HepG2 (cell line): ENCODE measurements at regions of chr3 and their contacts with region 1.

Region 1: GRCh38 chr3:48429317-48429959 is 448 bp downstream of the PLXNB1 start:
- DNase-seq: peak; percentile 50
- ATAC-seq: peak; percentile 4
- H3K4me3 ChIP-seq: peak overlapping the region; percentile 79 to 93 (median 86)
- H3K27ac ChIP-seq: peak overlapping the region; percentile 99
- H3K4me1 ChIP-seq: peaks cover 84% of the 10 kb centered on the region
- H3K27me3 ChIP-seq: no peaks in the 10 kb centered on the region
- CTCF ChIP-seq: no peak
- EP300 ChIP-seq: no peak
- POLR2A ChIP-seq: no peak; a peak in 1 of 4 replicates
- RAD21 ChIP-seq: peak; percentile 40

Region 2: GRCh38 chr3:48415554-48415953 is 13.9 kb before region 1 on chr3:
- CTCF ChIA-PET with region 1: interaction called, 9 read pairs
- POLR2A ChIA-PET with region 1: interaction called, 130 read pairs
- in situ Hi-C with region 1: no loop called
- intact Hi-C with region 1: no loop called
- DNase-seq: no peak
- ATAC-seq: peak; percentile 30
- H3K4me3 ChIP-seq: no peak overlapping the region
- H3K27ac ChIP-seq: no peak overlapping the region
- H3K4me1 ChIP-seq: no peaks in the 10 kb centered on the region
- H3K27me3 ChIP-seq: no peaks in the 10 kb centered on the region
- CTCF ChIP-seq: peak; percentile 56
- EP300 ChIP-seq: no peak
- POLR2A ChIP-seq: no peak
- RAD21 ChIP-seq: peak; percentile 60

Region 3: DNA sequence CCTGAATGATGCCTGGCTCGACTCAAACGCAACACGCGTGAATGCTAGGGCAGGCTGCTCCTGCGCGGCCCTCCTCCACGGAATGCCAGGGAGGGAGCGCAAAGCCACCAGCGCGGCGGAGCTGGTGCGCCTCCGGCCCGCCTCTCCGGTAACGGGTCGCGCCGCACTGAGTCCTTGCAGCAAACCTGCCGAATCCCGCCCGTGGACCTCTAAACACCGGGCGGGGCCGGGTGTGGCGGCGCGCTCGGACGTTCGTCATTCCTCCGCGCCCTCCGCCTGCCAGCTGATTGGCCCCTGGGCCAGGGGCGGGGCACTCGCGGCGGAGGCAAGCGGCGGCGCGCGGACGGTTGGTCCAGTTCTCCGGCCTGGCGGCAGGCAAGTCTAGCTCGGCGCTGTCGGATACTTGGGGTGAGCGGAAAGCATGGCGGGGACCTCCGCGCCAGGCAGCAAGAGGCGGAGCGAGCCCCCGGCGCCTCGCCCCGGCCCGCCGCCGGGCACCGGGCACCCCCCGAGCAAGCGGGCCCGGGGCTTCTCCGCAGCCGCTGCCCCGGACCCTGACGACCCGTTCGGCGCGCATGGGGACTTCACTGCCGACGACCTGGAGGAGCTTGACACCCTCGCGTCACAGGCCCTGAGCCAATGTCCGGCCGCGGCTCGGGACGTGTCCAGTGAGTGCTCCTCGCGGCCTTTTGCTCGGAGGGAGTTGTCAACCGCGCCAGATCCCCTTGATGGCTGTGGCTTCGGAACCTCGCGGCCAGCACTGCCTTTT is 17.2 kb after region 1 on chr3 and contains the start of gene ATRIP:
- CTCF ChIA-PET with region 1: no interaction called
- POLR2A ChIA-PET with region 1: interaction called, 120 read pairs
- in situ Hi-C with region 1: no loop called
- intact Hi-C with region 1: no loop called
- DNase-seq: peak; percentile 80
- ATAC-seq: peak; percentile 92
- H3K4me3 ChIP-seq: peak within 1 kb of the TSS; percentile 74 to 100 (median 86)
- H3K27ac ChIP-seq: peak within 1 kb of the TSS; percentile 78
- H3K4me1 ChIP-seq: peaks cover 59% of the 10 kb centered on the region
- H3K27me3 ChIP-seq: no peaks in the 10 kb centered on the region; a peak in 1 of 5 replicates
- CTCF ChIP-seq: no peak
- EP300 ChIP-seq: 0 out of 4 replicates have a peak, but pooled peaks of 1 of the 2 experiments have one; percentile 45
- POLR2A ChIP-seq: peak; percentile 91 to 98
- RAD21 ChIP-seq: peak; percentile 69
- total RNA-seq, gene ATRIP: 11.4 and 12.5 TPM in 2 replicates

Region 4: DNA sequence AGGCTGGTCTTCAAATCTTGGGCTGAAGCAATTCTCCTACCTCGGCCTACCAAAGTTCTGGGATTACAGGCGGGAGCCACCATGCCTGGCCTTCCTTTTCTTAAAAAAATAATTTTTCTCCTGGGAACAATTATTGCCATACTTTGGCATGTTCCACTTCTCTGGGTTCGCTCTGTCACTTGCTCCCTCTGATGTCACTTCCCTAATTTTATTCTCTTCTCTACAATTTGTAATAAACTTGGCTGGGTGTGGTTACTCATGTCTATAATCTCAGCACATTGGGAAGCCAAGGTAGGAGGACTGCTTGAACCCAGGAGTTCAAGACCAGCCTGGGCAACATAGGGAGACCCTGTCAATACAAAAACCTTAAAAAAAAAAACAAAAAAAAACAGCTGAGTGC is 605.8 kb after region 1 on chr3:
- CTCF ChIA-PET with region 1: no interaction called
- POLR2A ChIA-PET with region 1: no interaction called
- in situ Hi-C with region 1: no loop called
- intact Hi-C with region 1: no loop called
- DNase-seq: no peak
- ATAC-seq: no peak
- H3K4me3 ChIP-seq: no peak overlapping the region
- H3K27ac ChIP-seq: no peak overlapping the region
- H3K4me1 ChIP-seq: no peaks in the 10 kb centered on the region
- H3K27me3 ChIP-seq: no peaks in the 10 kb centered on the region
- CTCF ChIP-seq: no peak
- EP300 ChIP-seq: no peak
- POLR2A ChIP-seq: no peak
- RAD21 ChIP-seq: no peak